ENCODE measurements at regions of chr5 and their contacts with region 1.

Region 1: GRCh38 chr5:165448753-165449152 is 1943.3 kb downstream of the MAT2B start:
- DNase-seq: no peak
- H3K4me3 ChIP-seq: no peak overlapping the region
- H3K27ac ChIP-seq: no peak overlapping the region
- H3K4me1 ChIP-seq: no peaks in the 10 kb centered on the region
- H3K27me3 ChIP-seq: no peaks in the 10 kb centered on the region
- CTCF ChIP-seq: no peak
- EP300 ChIP-seq: no peak
- POLR2A ChIP-seq: no peak

Region 2: GRCh38 chr5:165370772-165371171 is 78.0 kb before region 1 on chr5:
- intact Hi-C with region 1: no loop called
- DNase-seq: no peak
- H3K4me3 ChIP-seq: no peak overlapping the region
- H3K27ac ChIP-seq: no peak overlapping the region
- H3K4me1 ChIP-seq: no peaks in the 10 kb centered on the region
- H3K27me3 ChIP-seq: no peaks in the 10 kb centered on the region
- CTCF ChIP-seq: no peak
- EP300 ChIP-seq: no peak
- POLR2A ChIP-seq: no peak

Region 3: GRCh38 chr5:167064198-167064776 is 1615.5 kb after region 1 on chr5:
- intact Hi-C with region 1: loop called in 1 of 4 experiments (anchors 5 kb)
- DNase-seq: no peak
- H3K4me3 ChIP-seq: no peak overlapping the region
- H3K27ac ChIP-seq: no peak overlapping the region
- H3K4me1 ChIP-seq: no peaks in the 10 kb centered on the region
- H3K27me3 ChIP-seq: no peaks in the 10 kb centered on the region
- CTCF ChIP-seq: no peak
- EP300 ChIP-seq: no peak
- POLR2A ChIP-seq: no peak

Measured in ovary (tissue), 10 donors.